ENCODE measurements at regions of chr1 and their contacts with region 1.

Region 1: GRCh38 chr1:32426489-32427255 is 32.4 kb upstream of the BSDC1 start:
- DNase-seq: no peak
- H3K4me3 ChIP-seq: peak overlapping the region; percentile 25
- H3K27me3 ChIP-seq: peaks cover 28% of the 10 kb centered on the region
- CTCF ChIP-seq: no peak

Region 2: GRCh38 chr1:32400876-32401631 is 25.6 kb before region 1 on chr1:
- CTCF ChIA-PET with region 1: interaction called, 23 read pairs
- POLR2A ChIA-PET with region 1: no interaction called
- DNase-seq: peak; percentile 83
- H3K4me3 ChIP-seq: no peak overlapping the region
- H3K27me3 ChIP-seq: no peaks in the 10 kb centered on the region
- CTCF ChIP-seq: peak; percentile 93

Region 3: DNA sequence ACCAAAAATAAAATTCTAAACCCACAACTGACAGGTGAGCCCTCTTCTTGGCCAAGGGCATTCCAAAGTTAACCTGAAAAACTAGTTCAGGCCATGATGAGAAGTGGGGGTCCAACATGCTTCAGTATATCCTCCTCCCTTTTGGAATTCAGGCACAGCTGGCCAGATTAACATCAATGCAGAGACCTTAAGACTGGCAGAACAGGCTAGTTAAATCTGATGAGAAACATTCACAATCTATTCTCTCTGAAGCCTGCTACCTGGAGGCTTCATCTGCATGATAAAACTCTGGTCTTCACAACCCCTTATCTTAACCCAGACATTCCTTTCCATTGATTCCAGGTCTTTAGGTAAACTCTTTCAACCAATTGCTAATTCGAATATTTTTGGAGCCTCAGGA is 11.5 kb after region 1 on chr1:
- CTCF ChIA-PET with region 1: no interaction called
- POLR2A ChIA-PET with region 1: no interaction called
- DNase-seq: no peak
- H3K4me3 ChIP-seq: no peak overlapping the region
- H3K27me3 ChIP-seq: no peaks in the 10 kb centered on the region; the same call in 1 of the 2 replicates
- CTCF ChIP-seq: no peak

Region 4: DNA sequence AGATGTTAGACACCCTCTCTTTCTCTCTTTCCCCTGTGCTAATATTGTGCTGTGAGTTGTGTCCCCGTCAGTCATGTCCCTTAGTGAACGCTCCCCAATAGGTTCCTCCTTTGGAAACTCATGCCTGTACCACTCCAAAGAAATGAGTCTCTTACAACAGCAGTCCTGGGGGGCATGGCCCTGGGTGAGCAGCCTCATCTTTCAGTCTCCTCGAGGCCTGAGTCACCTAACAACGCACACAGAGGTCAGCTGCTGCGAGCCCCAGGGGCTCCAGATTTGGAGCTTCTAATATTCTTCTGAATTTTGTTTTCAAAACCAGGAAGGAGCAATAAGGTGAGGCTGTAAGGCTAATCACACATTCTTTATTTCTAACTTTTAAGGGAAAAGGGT is 82.1 kb after region 1 on chr1:
- CTCF ChIA-PET with region 1: no interaction called
- POLR2A ChIA-PET with region 1: no interaction called
- DNase-seq: no peak
- H3K4me3 ChIP-seq: no peak overlapping the region
- H3K27me3 ChIP-seq: no peaks in the 10 kb centered on the region; the same call in 1 of the 2 replicates
- CTCF ChIP-seq: no peak

Measured in BJ (cell line).